Activated T-helper 1 cell treated with anti-CD3 and anti-CD28 coated beads, Interleukin-12 subunit alpha, Interleukin-12 subunit beta, Interleukin-2, Interleukin-4 antibody, amounts not matched to agents 30 ng/mL and 10 ng/mL and 1 ng/mL, durations not matched to agents 14 hours and 24 hours and 36 hours (primary cell): ENCODE measurements at regions of chr5 and their contacts with region 1.

Region 1: GRCh38 chr5:91269198-91269597 is 113.9 kb downstream of the ARRDC3 start:
- DNase-seq: peak; percentile 41
- H3K4me3 Mint-ChIP-seq: no peak overlapping the region
- H3K27ac Mint-ChIP-seq: peak overlapping the region; percentile 49
- H3K4me1 Mint-ChIP-seq: peaks cover 40% of the 10 kb centered on the region
- H3K27me3 Mint-ChIP-seq: peaks cover 17% of the 10 kb centered on the region

Region 2: DNA sequence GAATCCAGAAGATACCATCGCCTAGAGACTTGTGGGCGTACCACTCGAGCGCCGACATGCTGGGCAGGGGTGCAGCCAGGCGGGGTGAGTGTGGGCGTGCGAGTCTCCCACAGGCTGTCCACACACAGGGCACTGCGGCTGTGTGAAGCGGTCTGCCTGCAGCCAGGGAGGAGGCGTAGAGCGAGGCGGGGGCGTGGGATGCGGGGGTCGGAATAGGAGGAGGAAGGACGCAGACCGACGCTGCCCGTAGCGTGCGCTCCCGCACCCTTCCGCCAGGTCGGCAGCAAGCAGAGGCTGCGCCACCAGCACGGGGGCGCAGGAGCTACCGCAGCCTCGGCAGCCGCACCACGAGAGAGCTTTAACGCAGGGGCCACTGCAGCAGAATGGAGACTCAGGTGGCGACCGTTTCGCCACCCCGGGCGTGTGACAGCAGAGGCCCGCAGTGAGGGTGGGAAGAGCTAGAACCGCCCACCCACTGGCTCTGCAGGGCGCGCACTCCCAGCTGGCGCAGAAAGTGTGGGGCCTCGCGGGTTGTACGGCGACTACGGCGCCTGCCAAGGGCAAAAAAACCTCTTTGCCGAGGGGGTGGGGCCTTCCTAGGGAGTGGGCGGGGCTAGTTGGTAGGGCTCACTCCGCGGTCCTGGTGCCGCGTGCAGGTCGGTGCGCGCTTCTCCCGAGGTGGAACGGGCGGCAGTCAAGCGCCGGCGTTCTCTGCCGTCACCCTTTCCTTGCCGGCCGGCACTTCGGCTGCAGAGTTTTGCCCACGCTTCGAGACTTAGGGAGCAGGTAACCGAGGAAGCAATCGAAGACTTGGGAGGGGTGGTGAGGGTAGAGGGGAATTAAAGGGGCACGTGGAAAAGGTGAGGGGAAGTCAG is 794.7 kb before region 1 on chr5 and contains the starts of genes MBLAC2 and POLR3G:
- intact Hi-C with region 1: loop called (anchors 1 kb)
- DNase-seq: peak; percentile 87
- H3K4me3 Mint-ChIP-seq: peak within 1 kb of the TSS; percentile 98
- H3K27ac Mint-ChIP-seq: peak within 1 kb of the TSS; percentile 97
- H3K4me1 Mint-ChIP-seq: peaks cover 44% of the 10 kb centered on the region
- H3K27me3 Mint-ChIP-seq: no peaks in the 10 kb centered on the region
- total RNA-seq, gene MBLAC2: 5.0 and 5.7 TPM in 2 replicates
- total RNA-seq, gene POLR3G: 18.4 and 22.1 TPM in 2 replicates

Region 3: GRCh38 chr5:91332267-91333045 is 63.3 kb after region 1 on chr5:
- intact Hi-C with region 1: loop called (anchors 1 kb)
- DNase-seq: no peak
- H3K4me3 Mint-ChIP-seq: no peak overlapping the region
- H3K27ac Mint-ChIP-seq: peak overlapping the region; percentile 37
- H3K4me1 Mint-ChIP-seq: peaks cover 33% of the 10 kb centered on the region
- H3K27me3 Mint-ChIP-seq: peaks cover 11% of the 10 kb centered on the region

Region 4: DNA sequence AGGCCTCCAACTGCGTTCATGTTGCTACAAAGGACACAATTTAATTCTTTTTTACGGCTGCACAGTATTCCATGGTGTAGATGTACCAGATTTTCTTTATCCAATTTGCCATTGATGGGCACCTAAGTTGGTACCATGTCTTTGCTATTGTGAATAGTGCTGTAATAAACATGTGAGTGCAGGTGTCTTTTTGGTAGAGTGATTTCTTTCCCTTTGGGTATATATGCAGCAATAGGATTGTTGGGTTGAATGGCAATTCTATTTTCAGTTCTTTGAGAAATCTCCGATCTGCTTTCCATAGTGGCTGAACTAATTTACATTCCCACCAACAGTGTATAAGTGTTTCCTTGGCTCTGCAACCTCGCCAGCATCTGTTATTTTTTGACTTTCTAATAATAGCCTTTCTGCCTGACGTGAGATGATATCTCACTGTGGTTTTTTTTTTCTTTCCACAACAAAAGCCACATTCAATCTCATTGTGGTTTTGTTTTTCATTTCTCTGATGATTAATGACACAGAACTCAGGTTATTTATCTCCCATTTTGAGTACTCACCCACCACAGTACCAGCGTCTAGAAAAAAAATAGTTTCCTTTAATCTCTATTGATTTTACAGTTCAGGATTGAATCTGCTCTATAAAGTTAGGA is 92.0 kb after region 1 on chr5:
- intact Hi-C with region 1: loop called (anchors 1 kb)
- DNase-seq: no peak
- H3K4me3 Mint-ChIP-seq: no peak overlapping the region
- H3K27ac Mint-ChIP-seq: peak overlapping the region; percentile 67
- H3K4me1 Mint-ChIP-seq: peaks cover 14% of the 10 kb centered on the region
- H3K27me3 Mint-ChIP-seq: peaks cover 23% of the 10 kb centered on the region

Region 5: GRCh38 chr5:91656891-91657290 is 387.7 kb after region 1 on chr5:
- intact Hi-C with region 1: no loop called
- DNase-seq: no peak
- H3K4me3 Mint-ChIP-seq: no peak overlapping the region
- H3K27ac Mint-ChIP-seq: no peak overlapping the region
- H3K4me1 Mint-ChIP-seq: no peaks in the 10 kb centered on the region
- H3K27me3 Mint-ChIP-seq: no peaks in the 10 kb centered on the region